ENCODE measurements at regions of chr6 and their contacts with region 1.

Region 1: DNA sequence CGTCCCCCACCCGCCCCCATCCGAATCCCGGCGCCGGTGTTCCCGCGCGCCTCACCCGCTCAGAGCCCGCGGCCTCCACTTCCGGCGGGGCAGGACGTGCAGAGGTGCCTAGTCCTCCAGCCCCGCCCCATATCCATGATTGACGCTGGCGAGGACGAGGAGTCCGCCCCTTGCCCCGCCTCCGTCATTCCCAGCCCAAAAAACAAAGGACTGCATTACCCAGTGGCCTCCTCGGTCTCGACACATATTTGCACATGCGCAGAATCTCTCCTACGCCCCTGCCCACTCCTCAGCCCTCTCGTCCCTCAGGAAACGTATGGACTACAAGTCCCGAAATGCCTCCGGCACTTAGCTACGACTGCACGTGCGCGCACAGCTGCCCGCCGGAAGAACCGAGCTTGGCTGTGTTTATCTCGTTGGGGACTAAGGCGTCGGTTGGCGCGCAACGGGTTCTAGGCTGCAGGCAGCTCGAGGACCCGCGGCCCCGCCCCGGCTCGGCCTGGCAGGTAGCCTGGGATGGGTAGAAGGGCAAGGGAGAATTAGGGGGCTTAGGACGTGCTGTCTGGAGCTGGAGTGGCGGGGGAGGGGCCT is at the starts of genes KLHDC3 and MEA1:
- DNase-seq: peak; percentile 97 to 100 (median 98)
- ATAC-seq: peak; percentile 95
- H3K4me3 ChIP-seq: peak within 1 kb of the TSS; percentile 79
- H3K27ac ChIP-seq: peak within 1 kb of the TSS; percentile 81
- H3K4me1 ChIP-seq: peaks cover 34 to 41% of the 10 kb centered on the region in 2 experiments; a peak in 4 of 5 replicates
- H3K27me3 ChIP-seq: no peaks in the 10 kb centered on the region
- CTCF ChIP-seq: no peak; a peak in 1 of 6 replicates
- EP300 ChIP-seq: no peak
- POLR2A ChIP-seq: peak; percentile 71
- RAD21 ChIP-seq: no peak
- polyA plus RNA-seq, gene KLHDC3: 4.5 to 14.7 TPM
- polyA plus RNA-seq, gene MEA1: 152 to 210 TPM

Region 2: GRCh38 chr6:42928986-42929820 is 84.7 kb before region 1 on chr6 and contains the start of gene CNPY3:
- CTCF ChIA-PET with region 1: no interaction called
- POLR2A ChIA-PET with region 1: interaction called, 4 read pairs
- in situ Hi-C with region 1: no loop called
- intact Hi-C with region 1: loop called (anchors 1 kb)
- DNase-seq: peak; percentile 96 to 99 (median 96)
- ATAC-seq: peak; percentile 95
- H3K4me3 ChIP-seq: peak within 1 kb of the TSS; percentile 76
- H3K27ac ChIP-seq: peak within 1 kb of the TSS; percentile 90
- H3K4me1 ChIP-seq: peaks cover 17 to 28% of the 10 kb centered on the region in 2 experiments; a peak in 4 of 5 replicates
- H3K27me3 ChIP-seq: no peaks in the 10 kb centered on the region
- CTCF ChIP-seq: peak in 2 of 3 experiments; percentile 15 to 36; a peak in 2 of 6 replicates
- EP300 ChIP-seq: peak; percentile 31; the same call in 1 of the 2 replicates
- POLR2A ChIP-seq: peak; percentile 88
- RAD21 ChIP-seq: peak; percentile 1 to 3; a peak in 1 of 4 replicates
- polyA plus RNA-seq, gene CNPY3: 2.4 to 3.9 TPM

Region 3: GRCh38 chr6:42978839-42979522 is 35.0 kb before region 1 on chr6 and contains the start of gene PEX6:
- CTCF ChIA-PET with region 1: no interaction called
- POLR2A ChIA-PET with region 1: interaction called, 23 read pairs
- in situ Hi-C with region 1: no loop called
- intact Hi-C with region 1: loop called (anchors 2 kb)
- DNase-seq: peak; percentile 94 to 98 (median 94)
- ATAC-seq: peak; percentile 91
- H3K4me3 ChIP-seq: peak within 1 kb of the TSS; percentile 95
- H3K27ac ChIP-seq: peak within 1 kb of the TSS; percentile 88
- H3K4me1 ChIP-seq: peaks cover 25 to 32% of the 10 kb centered on the region in 2 experiments; a peak in 4 of 5 replicates
- H3K27me3 ChIP-seq: no peaks in the 10 kb centered on the region
- CTCF ChIP-seq: peak in 1 of 3 experiments; percentile 3; a peak in 1 of 6 replicates
- EP300 ChIP-seq: peak; percentile 41; the same call in 1 of the 2 replicates
- POLR2A ChIP-seq: peak; percentile 97
- RAD21 ChIP-seq: no peak; a peak in 1 of 4 replicates
- polyA plus RNA-seq, gene PEX6: 0.17 to 0.77 TPM

Region 4: DNA sequence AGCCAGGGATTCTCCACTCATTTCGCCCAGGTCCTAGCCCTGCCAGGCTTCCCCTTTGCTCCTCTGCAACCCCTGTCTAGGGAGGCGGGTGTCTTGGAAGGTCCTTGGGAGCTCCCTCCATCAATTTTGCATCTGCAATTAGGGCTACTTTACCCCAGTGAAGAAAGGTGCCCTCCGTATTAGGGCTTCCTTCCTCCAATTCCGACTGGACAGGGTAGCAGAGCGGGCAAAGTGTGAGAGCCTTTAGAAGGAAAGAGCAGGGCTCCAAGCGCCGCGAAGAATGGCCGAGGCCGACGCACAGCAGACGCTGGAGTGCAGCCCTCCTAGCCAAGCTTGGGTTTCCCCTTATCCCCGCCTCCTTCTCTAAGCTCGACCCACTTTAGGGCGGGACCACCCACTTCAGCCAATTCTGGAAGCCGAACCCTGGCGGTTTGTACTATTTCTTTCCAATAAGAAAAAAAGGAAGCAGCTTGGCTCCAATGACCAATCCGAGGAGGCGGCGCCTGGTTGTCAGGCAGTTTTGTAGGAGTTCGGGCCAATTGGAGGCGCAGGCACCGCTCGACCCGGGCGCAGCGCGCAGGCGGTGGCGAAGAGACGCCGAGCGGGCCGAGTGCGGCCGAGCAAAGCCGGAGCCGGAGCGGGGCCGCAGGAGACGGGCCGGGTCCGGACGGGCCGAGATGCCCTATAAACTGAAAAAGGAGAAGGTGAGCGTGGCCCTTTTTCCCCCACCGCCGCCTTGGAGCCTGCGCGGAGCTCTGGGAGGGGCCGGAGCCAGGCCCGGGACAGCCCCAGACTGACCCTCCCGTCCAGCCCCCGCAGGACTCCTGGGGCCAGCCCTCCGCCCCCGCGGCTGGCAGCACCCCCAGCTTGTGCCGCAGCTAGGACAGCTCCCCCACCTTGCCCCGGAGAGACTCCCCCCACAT is 29.7 kb before region 1 on chr6 and contains the start of gene PPP2R5D:
- CTCF ChIA-PET with region 1: no interaction called
- POLR2A ChIA-PET with region 1: interaction called, 23 read pairs
- in situ Hi-C with region 1: no loop called
- intact Hi-C with region 1: loop called (anchors 2 kb)
- DNase-seq: peak; percentile 93 to 100 (median 96)
- ATAC-seq: peak; percentile 96
- H3K4me3 ChIP-seq: peak within 1 kb of the TSS; percentile 64
- H3K27ac ChIP-seq: peak within 1 kb of the TSS; percentile 69
- H3K4me1 ChIP-seq: peaks cover 38 to 39% of the 10 kb centered on the region in 2 experiments
- H3K27me3 ChIP-seq: no peaks in the 10 kb centered on the region
- CTCF ChIP-seq: no peak; a peak in 1 of 6 replicates
- EP300 ChIP-seq: no peak
- POLR2A ChIP-seq: peak; percentile 90
- RAD21 ChIP-seq: no peak
- polyA plus RNA-seq, gene PPP2R5D: 1.3 to 1.9 TPM

Region 5: GRCh38 chr6:43035495-43036194 is 21.7 kb after region 1 on chr6:
- CTCF ChIA-PET with region 1: no interaction called
- POLR2A ChIA-PET with region 1: interaction called, 19 read pairs
- in situ Hi-C with region 1: no loop called
- intact Hi-C with region 1: no loop called
- DNase-seq: no peak
- ATAC-seq: no peak
- H3K4me3 ChIP-seq: no peak overlapping the region
- H3K27ac ChIP-seq: no peak overlapping the region; the same call in 2 of the 3 replicates
- H3K4me1 ChIP-seq: peaks cover 0 to 10% of the 10 kb centered on the region in 2 experiments; a peak in 3 of 5 replicates
- H3K27me3 ChIP-seq: no peaks in the 10 kb centered on the region
- CTCF ChIP-seq: no peak
- EP300 ChIP-seq: no peak
- POLR2A ChIP-seq: no peak
- RAD21 ChIP-seq: no peak

Region 6: DNA sequence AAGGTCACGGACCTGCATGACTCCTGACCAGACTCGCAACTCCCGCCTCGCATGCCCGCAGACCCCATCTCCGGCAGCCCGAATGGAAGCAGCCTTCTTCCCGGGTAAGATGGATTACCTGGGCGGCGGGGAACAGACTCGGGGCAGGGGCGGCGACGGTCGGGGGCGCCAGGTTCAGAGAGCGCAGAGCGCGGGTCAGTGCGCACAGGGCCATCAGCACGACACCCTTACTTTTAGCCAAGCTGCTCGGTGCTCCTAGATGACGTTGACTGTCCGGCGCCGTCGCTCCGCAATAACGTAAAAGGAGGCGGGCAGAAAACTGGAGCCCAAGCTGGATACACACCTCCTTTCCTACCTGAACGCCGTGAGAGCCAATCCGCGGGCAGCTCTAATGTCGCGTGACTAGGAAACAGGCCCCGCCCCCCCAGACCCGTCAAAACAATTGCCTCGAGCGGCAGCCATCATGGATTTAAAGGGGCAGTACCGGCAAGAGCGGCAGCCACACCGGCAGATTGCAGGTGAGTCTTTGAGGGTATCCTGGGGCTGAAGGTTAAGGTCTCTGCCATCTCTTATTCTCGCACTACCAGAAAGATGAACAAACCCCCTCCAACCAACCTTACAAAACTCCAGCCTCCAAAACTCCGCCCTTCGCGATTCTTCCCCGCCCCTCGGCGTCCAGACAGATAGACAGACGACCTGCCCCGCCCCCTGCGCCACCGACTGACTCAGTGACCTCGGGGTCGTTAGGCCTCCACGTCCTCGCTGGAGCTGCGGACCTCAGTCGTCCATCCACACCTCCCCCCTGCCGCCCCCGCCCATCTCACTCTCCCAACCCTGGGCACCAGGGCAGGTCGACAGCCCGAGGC is 45.5 kb after region 1 on chr6 and contains the starts of genes KLC4 and MRPL2:
- CTCF ChIA-PET with region 1: no interaction called
- POLR2A ChIA-PET with region 1: interaction called, 7 read pairs
- in situ Hi-C with region 1: no loop called
- intact Hi-C with region 1: loop called (anchors 2 kb)
- DNase-seq: peak; percentile 99 to 100 (median 100)
- ATAC-seq: peak; percentile 97
- H3K4me3 ChIP-seq: peak within 1 kb of the TSS; percentile 88
- H3K27ac ChIP-seq: peak within 1 kb of the TSS; percentile 96
- H3K4me1 ChIP-seq: peaks cover 15 to 18% of the 10 kb centered on the region in 2 experiments
- H3K27me3 ChIP-seq: no peaks in the 10 kb centered on the region
- CTCF ChIP-seq: no peak
- EP300 ChIP-seq: no peak
- POLR2A ChIP-seq: peak; percentile 97
- RAD21 ChIP-seq: no peak
- polyA plus RNA-seq, gene KLC4: 1.7 to 3.0 TPM
- polyA plus RNA-seq, gene MRPL2: 63.1 to 130 TPM

Region 7: GRCh38 chr6:43143235-43144124 is 129.5 kb after region 1 on chr6:
- CTCF ChIA-PET with region 1: interaction called, 15 read pairs
- POLR2A ChIA-PET with region 1: interaction called, 5 read pairs
- in situ Hi-C with region 1: no loop called
- intact Hi-C with region 1: loop called (anchors 1 kb)
- DNase-seq: peak; percentile 91 to 98 (median 96)
- ATAC-seq: peak; percentile 99
- H3K4me3 ChIP-seq: no peak overlapping the region
- H3K27ac ChIP-seq: peak overlapping the region; percentile 47; the same call in 2 of the 3 replicates
- H3K4me1 ChIP-seq: peaks cover 5 to 21% of the 10 kb centered on the region in 2 experiments; a peak in 4 of 5 replicates
- H3K27me3 ChIP-seq: no peaks in the 10 kb centered on the region; a peak in 1 of 5 replicates
- CTCF ChIP-seq: peak; percentile 98 to 99 (median 99)
- EP300 ChIP-seq: no peak; the same call in 1 of the 2 replicates
- POLR2A ChIP-seq: no peak
- RAD21 ChIP-seq: peak; percentile 99 to 100

Region 8: GRCh38 chr6:43217351-43217750 is 203.4 kb after region 1 on chr6:
- CTCF ChIA-PET with region 1: no interaction called
- POLR2A ChIA-PET with region 1: no interaction called
- in situ Hi-C with region 1: no loop called
- intact Hi-C with region 1: no loop called
- DNase-seq: no peak
- ATAC-seq: no peak
- H3K4me3 ChIP-seq: no peak overlapping the region
- H3K27ac ChIP-seq: no peak overlapping the region
- H3K4me1 ChIP-seq: peaks cover 12 to 31% of the 10 kb centered on the region in 2 experiments; a peak in 4 of 5 replicates
- H3K27me3 ChIP-seq: no peaks in the 10 kb centered on the region
- CTCF ChIP-seq: no peak
- EP300 ChIP-seq: no peak
- POLR2A ChIP-seq: no peak
- RAD21 ChIP-seq: no peak